Activated T-helper 2 cell treated with anti-CD3 and anti-CD28 coated beads, Interferon-gamma antibody, Interleukin-2, Interleukin-4, amounts not matched to agents 10 μg/mL and 5 μg/mL and 100 μg/mL, durations not matched to agents 14 hours and 24 hours and 36 hours (primary cell): ENCODE measurements at regions of chr11 and their contacts with region 1.

Region 1: DNA sequence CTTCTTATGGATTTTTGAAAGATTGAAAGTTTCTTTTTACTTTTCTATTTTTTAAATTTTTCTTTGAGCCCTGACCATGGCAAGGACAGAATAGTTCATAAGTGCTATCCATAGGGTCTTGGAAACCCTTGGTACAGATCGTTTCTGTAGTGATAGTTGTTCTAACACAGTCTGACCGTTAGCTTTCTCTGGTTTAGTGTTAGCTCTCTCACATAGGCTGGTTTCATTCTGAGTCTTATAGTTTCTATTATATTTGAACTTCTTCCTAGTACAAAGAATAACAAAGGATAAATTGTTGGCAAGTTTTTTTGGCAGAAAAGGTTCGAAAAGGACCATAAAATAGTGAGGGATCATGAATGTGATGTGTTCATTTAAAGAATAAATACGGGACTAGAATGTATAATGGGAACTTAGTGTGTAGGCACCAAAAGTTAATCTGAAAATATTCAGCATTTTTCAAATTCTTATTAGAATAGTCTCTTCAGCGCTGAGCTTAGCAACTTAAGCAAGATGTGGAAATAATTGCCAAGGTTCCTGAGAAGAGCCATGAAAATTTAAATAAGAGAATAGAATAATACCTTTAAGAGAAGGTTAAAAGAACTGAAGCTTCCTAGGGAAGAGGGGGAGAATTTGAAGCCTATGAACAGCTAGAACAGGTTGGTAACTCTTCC is 24.1 kb downstream of the FDX1 start:
- DNase-seq: no peak
- H3K4me3 Mint-ChIP-seq: peak overlapping the region; percentile 28
- H3K27ac Mint-ChIP-seq: peak overlapping the region; percentile 34
- H3K4me1 Mint-ChIP-seq: peaks cover 55% of the 10 kb centered on the region
- H3K27me3 Mint-ChIP-seq: no peaks in the 10 kb centered on the region

Region 2: DNA sequence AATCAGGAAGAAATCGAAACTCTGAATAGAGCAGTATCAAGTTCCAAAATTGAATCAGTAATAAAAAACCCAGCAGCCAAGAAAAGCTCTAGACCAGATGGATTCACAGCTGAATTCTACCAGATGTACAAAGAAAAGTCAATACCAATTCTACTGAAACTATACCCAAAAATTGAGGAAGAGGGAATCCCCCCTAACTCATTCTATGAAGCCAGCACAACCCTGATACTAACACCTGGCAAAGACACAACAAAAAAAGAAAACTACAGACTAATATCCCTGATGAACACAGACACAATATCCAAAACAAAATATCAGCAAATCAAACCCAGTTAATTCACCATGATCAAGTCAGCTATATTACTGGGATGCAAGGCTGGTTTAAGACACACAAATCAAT is 262.9 kb before region 1 on chr11:
- intact Hi-C with region 1: loop called (anchors 5 kb)
- DNase-seq: no peak
- H3K4me3 Mint-ChIP-seq: no peak overlapping the region
- H3K27ac Mint-ChIP-seq: no peak overlapping the region
- H3K4me1 Mint-ChIP-seq: peaks cover 24% of the 10 kb centered on the region
- H3K27me3 Mint-ChIP-seq: peaks cover 36% of the 10 kb centered on the region

Region 3: DNA sequence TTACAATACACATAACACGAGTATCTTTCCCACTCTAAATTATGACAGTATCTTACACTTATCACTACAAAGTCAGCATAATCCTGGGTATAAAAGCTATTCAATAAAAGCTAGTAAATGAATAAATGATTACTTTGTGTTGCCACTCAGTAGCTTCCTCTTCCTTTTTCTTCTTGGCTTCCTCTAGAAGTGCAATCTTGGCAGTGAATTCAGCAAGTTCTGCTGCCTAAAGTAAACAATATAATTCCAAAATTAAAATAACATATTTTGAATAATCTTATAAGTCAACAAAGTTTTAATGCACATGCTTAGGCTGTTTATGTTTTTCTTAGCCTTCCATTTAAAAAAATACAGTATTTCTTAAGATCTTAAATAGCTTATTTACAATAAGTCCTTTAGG is 217.9 kb before region 1 on chr11:
- intact Hi-C with region 1: no loop called
- DNase-seq: no peak
- H3K4me3 Mint-ChIP-seq: no peak overlapping the region
- H3K27ac Mint-ChIP-seq: no peak overlapping the region
- H3K4me1 Mint-ChIP-seq: peaks cover 2% of the 10 kb centered on the region
- H3K27me3 Mint-ChIP-seq: no peaks in the 10 kb centered on the region

Region 4: GRCh38 chr11:110429731-110430266 is 24.0 kb before region 1 on chr11 and contains the start of gene FDX1:
- intact Hi-C with region 1: loop called (anchors 1 kb)
- DNase-seq: peak; percentile 78
- H3K4me3 Mint-ChIP-seq: peak within 1 kb of the TSS; percentile 98
- H3K27ac Mint-ChIP-seq: peak within 1 kb of the TSS; percentile 94
- H3K4me1 Mint-ChIP-seq: peaks cover 41% of the 10 kb centered on the region
- H3K27me3 Mint-ChIP-seq: no peaks in the 10 kb centered on the region
- total RNA-seq, gene FDX1: 13.0 and 13.1 TPM in 2 replicates

Region 5: GRCh38 chr11:110711776-110712658 is 258.2 kb after region 1 on chr11 and contains the start of gene ARHGAP20:
- intact Hi-C with region 1: loop called (anchors 5 kb)
- DNase-seq: peak; percentile 33
- H3K4me3 Mint-ChIP-seq: peak within 1 kb of the TSS; percentile 59
- H3K27ac Mint-ChIP-seq: no peak within 1 kb of the TSS
- H3K4me1 Mint-ChIP-seq: peaks cover 14% of the 10 kb centered on the region
- H3K27me3 Mint-ChIP-seq: peaks cover 65% of the 10 kb centered on the region
- total RNA-seq, gene ARHGAP20: not detected in 2 replicates

Region 6: GRCh38 chr11:111206472-111206871 is 752.7 kb after region 1 on chr11:
- intact Hi-C with region 1: loop called (anchors 5 kb)
- DNase-seq: no peak
- H3K4me3 Mint-ChIP-seq: no peak overlapping the region
- H3K27ac Mint-ChIP-seq: no peak overlapping the region
- H3K4me1 Mint-ChIP-seq: peaks cover 5% of the 10 kb centered on the region
- H3K27me3 Mint-ChIP-seq: peaks cover 11% of the 10 kb centered on the region

Region 7: GRCh38 chr11:111378861-111379601 is 925.2 kb after region 1 on chr11 and contains the start of gene POU2AF1:
- intact Hi-C with region 1: loop called (anchors 5 kb)
- DNase-seq: peak; percentile 68
- H3K4me3 Mint-ChIP-seq: peak within 1 kb of the TSS; percentile 80
- H3K27ac Mint-ChIP-seq: peak within 1 kb of the TSS; percentile 98
- H3K4me1 Mint-ChIP-seq: peaks cover 73% of the 10 kb centered on the region
- H3K27me3 Mint-ChIP-seq: no peaks in the 10 kb centered on the region
- total RNA-seq, gene POU2AF1: 35.2 and 37.2 TPM in 2 replicates